BJ (cell line): ENCODE measurements at regions of chr12 and their contacts with region 1.

Region 1: DNA sequence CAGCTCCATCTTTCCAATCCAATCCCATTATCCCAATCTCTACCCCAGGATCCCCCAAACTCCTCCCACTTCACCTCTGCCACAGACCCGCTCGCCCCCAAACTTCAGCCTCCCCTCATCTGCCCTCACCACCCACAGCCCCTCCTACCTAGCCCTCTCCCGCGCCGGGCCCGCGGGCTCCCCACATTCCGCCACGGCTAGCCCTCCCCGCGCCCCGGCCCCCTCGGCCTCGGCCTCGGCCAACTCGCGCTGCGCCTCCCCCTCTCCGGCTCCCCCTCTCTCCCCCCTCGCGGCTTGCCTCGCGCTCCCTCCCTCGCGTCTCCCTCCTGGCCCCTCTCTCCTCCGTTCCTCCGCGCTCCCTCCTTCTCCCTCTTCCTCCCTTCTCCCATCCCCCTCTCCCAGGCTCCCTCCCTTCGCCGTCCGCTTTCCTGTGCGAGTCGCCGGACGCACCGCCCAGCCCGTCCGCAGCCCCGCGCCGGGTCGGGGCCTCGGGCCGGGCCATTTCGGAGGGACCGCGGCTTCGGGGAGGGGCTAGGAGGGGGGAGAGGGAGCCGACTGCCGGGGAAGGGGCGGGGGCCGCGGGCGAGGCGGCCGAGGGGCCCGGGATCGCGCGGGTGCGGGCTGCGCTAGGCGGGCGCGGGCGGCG is at the start of gene ATN1:
- DNase-seq: no peak
- H3K4me3 ChIP-seq: peak within 1 kb of the TSS; percentile 55
- H3K27me3 ChIP-seq: no peaks in the 10 kb centered on the region
- CTCF ChIP-seq: no peak
- polyA plus RNA-seq, gene ATN1: 13.0 and 15.9 TPM in 2 replicates

Region 2: DNA sequence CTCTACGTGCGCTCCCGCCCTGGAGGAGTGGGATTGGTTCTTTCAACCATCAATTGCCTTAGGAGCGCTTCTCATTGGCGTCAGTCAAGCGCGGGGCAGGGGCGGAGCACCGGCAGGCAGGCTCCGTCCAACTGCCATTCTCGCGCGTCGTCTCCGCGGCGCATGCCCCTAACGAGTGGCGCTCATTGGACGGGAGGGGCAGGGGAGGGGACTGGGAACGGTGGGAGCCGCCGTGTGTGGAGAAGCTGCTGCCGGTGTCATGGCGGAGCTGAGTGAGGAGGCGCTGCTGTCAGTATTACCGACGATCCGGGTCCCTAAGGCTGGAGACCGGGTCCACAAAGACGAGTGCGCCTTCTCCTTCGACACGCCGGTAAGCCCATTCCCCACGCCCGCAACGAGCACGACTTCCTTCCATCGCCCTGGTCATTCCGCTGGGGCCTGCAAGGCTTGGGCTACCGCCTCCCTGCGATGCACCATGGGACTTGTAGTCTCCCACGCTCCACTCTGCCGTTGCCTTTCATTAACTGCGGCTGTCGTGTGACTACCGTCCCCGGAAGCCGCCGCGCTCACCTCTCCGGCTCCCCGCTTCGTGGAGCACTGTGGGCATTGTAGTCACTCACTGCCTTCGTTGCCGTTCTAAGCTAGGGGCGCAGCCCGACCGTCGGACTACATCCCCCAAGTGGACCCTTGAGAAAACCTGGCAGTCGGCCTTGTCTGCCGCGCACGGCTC is 75.4 kb before region 1 on chr12 and contains the start of gene USP5:
- CTCF ChIA-PET with region 1: no interaction called
- POLR2A ChIA-PET with region 1: no interaction called
- DNase-seq: peak; percentile 99
- H3K4me3 ChIP-seq: peak within 1 kb of the TSS; percentile 78
- H3K27me3 ChIP-seq: no peaks in the 10 kb centered on the region
- CTCF ChIP-seq: 0 out of 2 replicates have a peak, but pooled peaks have one; percentile 3
- polyA plus RNA-seq, gene USP5: 52.9 and 90.0 TPM in 2 replicates

Region 3: DNA sequence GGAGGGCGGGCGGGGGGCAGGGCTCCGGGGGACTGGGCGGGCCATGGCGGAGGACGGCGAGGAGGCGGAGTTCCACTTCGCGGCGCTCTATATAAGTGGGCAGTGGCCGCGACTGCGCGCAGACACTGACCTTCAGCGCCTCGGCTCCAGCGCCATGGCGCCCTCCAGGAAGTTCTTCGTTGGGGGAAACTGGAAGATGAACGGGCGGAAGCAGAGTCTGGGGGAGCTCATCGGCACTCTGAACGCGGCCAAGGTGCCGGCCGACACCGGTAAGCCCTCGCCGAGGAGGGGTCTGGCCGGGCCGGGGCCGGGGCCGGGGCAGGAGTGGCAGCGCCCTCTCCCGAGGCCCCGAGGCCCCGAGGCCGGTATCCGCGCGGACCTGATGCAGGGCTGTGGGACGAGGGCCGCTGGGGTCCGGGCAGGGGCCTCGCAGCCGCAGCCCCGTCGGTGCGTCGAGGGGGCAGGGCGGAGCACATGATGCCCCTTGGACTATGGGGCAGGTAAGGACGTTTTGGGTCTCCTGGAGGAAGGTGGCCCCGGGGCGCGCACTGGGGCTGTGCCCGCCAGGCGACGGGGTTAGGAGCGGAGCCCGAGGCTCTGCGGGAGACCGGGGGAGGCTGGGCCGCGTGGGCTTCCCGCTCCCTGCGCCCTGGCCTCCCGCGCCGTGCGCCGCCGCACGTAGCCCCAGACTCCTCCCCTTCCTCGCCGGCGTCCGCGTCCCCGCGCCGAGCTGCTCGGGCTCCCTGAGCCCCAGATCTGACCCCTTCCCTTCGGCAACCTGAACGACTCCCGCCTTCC is 59.9 kb before region 1 on chr12 and contains the start of gene TPI1:
- CTCF ChIA-PET with region 1: interaction called, 43 read pairs
- POLR2A ChIA-PET with region 1: interaction called, 5 read pairs
- DNase-seq: no peak
- H3K4me3 ChIP-seq: peak within 1 kb of the TSS; percentile 98
- H3K27me3 ChIP-seq: no peaks in the 10 kb centered on the region
- CTCF ChIP-seq: no peak
- polyA plus RNA-seq, gene TPI1: 2,446 and 2,656 TPM in 2 replicates

Region 4: GRCh38 chr12:6904280-6905278 is 22.9 kb before region 1 on chr12 and contains the start of gene LRRC23:
- CTCF ChIA-PET with region 1: interaction called, 12 read pairs
- POLR2A ChIA-PET with region 1: no interaction called
- DNase-seq: peak; percentile 73
- H3K4me3 ChIP-seq: peak within 1 kb of the TSS; percentile 58
- H3K27me3 ChIP-seq: no peaks in the 10 kb centered on the region
- CTCF ChIP-seq: no peak
- polyA plus RNA-seq, gene LRRC23: 12.7 and 13.3 TPM in 2 replicates

Region 5: DNA sequence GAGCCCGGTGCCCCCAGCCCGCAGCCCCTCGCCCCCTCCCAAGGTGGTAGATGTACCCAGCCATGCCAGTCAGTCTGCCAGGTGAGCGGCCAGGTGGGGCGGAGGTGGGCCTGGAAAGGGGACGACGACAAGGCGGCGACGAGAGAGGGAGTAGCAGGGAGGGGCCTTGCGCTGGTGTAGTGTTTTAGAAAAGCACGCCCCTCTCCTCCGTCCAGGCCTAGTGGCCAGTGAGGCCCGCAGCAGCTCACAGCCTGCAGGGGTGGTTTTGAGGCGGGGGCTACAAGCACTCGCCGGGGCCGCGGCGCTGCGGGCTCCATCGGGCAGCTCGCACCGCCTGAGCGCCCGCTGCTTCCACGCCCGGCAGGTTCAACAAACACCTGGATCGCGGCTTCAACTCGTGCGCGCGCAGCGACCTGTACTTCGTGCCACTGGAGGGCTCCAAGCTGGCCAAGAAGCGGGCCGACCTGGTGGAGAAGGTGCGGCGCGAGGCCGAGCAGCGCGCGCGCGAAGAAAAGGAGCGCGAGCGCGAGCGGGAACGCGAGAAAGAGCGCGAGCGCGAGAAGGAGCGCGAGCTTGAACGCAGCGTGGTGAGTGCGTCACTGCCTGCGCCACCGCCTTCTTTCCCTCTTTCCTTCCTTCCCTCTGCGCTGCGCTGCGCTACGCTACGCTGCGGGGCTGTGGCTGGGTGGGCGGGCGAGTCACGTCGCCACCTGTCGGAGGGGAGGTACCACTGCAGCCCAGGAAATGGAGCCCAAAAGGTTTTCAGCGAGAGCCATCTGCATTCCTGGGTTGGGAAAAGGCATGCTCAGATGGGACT is 10.2 kb after region 1 on chr12:
- CTCF ChIA-PET with region 1: interaction called, 129 read pairs
- POLR2A ChIA-PET with region 1: interaction called, 6 read pairs
- DNase-seq: peak; percentile 48
- H3K4me3 ChIP-seq: peak overlapping the region; percentile 60
- H3K27me3 ChIP-seq: no peaks in the 10 kb centered on the region
- CTCF ChIP-seq: peak; percentile 97

Region 6: DNA sequence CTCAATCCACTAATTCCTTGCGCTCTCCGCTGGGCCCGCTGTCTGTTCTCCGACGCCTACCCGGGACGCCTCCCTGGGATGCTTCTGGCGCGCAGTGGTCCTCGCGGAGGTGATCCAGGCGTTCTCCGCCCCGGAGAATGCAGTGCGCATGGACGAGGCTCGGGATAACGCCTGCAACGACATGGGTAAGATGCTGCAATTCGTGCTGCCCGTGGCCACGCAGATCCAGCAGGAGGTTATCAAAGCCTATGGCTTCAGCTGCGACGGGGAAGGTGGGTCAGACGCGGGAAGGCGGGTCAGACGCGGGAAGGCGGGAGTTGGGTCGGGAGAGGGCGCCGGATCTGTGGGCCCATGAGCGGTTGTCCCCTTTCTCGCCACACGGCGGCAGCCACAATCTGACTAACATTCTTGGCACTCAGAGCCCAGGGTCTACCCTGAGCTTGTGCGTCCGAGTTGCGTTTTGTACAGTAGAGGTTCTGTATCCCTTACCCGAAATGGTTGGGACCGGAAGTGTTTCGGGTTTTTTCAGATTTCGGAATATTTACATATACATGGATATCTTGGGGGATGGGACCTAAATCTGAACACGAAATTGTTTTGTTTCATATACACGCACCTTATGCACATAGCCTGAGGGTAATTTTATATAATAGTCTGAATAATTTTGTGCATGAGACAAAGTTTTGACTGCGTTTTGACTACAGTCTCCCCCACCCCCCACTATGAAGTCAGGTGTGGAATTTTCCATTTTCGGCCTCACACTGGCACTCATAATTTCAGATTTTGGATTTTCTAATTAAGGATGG is 17.1 kb after region 1 on chr12:
- CTCF ChIA-PET with region 1: interaction called, 129 read pairs
- POLR2A ChIA-PET with region 1: interaction called, 13 read pairs
- DNase-seq: peak; percentile 57
- H3K4me3 ChIP-seq: peak overlapping the region; percentile 67
- H3K27me3 ChIP-seq: no peaks in the 10 kb centered on the region
- CTCF ChIP-seq: peak; percentile 87

Region 7: GRCh38 chr12:6965026-6965661 is 37.6 kb after region 1 on chr12:
- CTCF ChIA-PET with region 1: interaction called, 55 read pairs
- POLR2A ChIA-PET with region 1: interaction called, 4 read pairs
- DNase-seq: peak; percentile 37
- H3K4me3 ChIP-seq: no peak overlapping the region
- H3K27me3 ChIP-seq: no peaks in the 10 kb centered on the region
- CTCF ChIP-seq: peak; percentile 92